ENCODE measurements at regions of chr9 and their contacts with region 1.

Region 1: GRCh38 chr9:136790927-136791641 is at the start of gene TMEM141:
- DNase-seq: peak; percentile 99 to 100 (median 99)
- ATAC-seq: peak; percentile 92
- H3K4me3 ChIP-seq: peak within 1 kb of the TSS; percentile 94
- H3K4me3 Mint-ChIP-seq: peak within 1 kb of the TSS; percentile 76 to 90 (median 86)
- H3K27ac ChIP-seq: peak within 1 kb of the TSS; percentile 91
- H3K27ac Mint-ChIP-seq: peak within 1 kb of the TSS; percentile 57 to 98 (median 92)
- H3K4me1 ChIP-seq: peaks cover 18 to 22% of the 10 kb centered on the region in 2 donors
- H3K4me1 Mint-ChIP-seq: peaks cover 10 to 40% (median 31%) of the 10 kb centered on the region in 7 donors
- H3K27me3 ChIP-seq: no peaks in the 10 kb centered on the region
- H3K27me3 Mint-ChIP-seq: peaks cover 0 to 16% (median 0%) of the 10 kb centered on the region in 5 donors
- total RNA-seq, gene TMEM141: 27.2 to 54.9 (median 36.2) TPM

Region 2: GRCh38 chr9:136728080-136728547 is 63.0 kb before region 1 on chr9:
- CTCF ChIA-PET with region 1: interaction called, 6 read pairs
- POLR2A ChIA-PET with region 1: interaction called, 3 read pairs
- intact Hi-C with region 1: loop called in 1 of 2 experiments (anchors 5 kb)
- DNase-seq: peak; percentile 87 to 97 (median 92)
- ATAC-seq: peak; percentile 96
- H3K4me3 ChIP-seq: peak overlapping the region; percentile 87
- H3K4me3 Mint-ChIP-seq: peak overlapping the region in 9 of 10 donors; percentile 47 to 99 (median 95)
- H3K27ac ChIP-seq: peak overlapping the region; percentile 83
- H3K27ac Mint-ChIP-seq: peak overlapping the region in 7 of 9 donors; percentile 47 to 93 (median 92)
- H3K4me1 ChIP-seq: peaks cover 16 to 17% of the 10 kb centered on the region in 2 donors
- H3K4me1 Mint-ChIP-seq: peaks cover 12 to 37% (median 28%) of the 10 kb centered on the region in 7 donors
- H3K27me3 ChIP-seq: no peaks in the 10 kb centered on the region
- H3K27me3 Mint-ChIP-seq: peaks cover 0 to 5% (median 0%) of the 10 kb centered on the region in 5 donors

Region 3: DNA sequence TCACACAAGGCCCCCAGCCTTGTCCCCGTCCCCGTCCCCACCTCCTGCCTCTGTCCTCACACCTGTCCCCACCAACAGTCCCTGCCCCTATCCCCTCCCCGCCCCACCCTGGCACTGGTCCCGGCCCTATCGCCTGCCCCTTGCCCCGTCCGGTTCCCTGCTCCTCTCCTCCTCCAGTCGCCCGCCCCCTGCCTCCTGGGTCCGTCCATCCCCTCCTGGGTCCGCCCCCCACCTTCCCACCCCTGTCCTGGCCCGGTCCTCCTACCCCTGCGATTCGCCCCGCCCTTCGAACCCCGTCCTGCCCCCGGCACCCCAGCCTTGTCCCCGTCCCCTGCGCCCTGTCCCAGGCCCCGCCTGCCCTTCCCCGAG is 74.6 kb after region 1 on chr9:
- CTCF ChIA-PET with region 1: no interaction called
- POLR2A ChIA-PET with region 1: no interaction called
- intact Hi-C with region 1: loop called in 1 of 2 experiments (anchors 1 kb)
- DNase-seq: no peak
- ATAC-seq: no peak
- H3K4me3 ChIP-seq: peak overlapping the region; percentile 68
- H3K4me3 Mint-ChIP-seq: peak overlapping the region; percentile 55 to 94 (median 87)
- H3K27ac ChIP-seq: peak overlapping the region; percentile 99
- H3K27ac Mint-ChIP-seq: peak overlapping the region; percentile 36 to 94 (median 87)
- H3K4me1 ChIP-seq: peaks cover 7 to 8% of the 10 kb centered on the region in 2 donors
- H3K4me1 Mint-ChIP-seq: peaks cover 4 to 24% (median 19%) of the 10 kb centered on the region in 7 donors
- H3K27me3 ChIP-seq: no peaks in the 10 kb centered on the region
- H3K27me3 Mint-ChIP-seq: no peaks in the 10 kb centered on the region

Region 4: DNA sequence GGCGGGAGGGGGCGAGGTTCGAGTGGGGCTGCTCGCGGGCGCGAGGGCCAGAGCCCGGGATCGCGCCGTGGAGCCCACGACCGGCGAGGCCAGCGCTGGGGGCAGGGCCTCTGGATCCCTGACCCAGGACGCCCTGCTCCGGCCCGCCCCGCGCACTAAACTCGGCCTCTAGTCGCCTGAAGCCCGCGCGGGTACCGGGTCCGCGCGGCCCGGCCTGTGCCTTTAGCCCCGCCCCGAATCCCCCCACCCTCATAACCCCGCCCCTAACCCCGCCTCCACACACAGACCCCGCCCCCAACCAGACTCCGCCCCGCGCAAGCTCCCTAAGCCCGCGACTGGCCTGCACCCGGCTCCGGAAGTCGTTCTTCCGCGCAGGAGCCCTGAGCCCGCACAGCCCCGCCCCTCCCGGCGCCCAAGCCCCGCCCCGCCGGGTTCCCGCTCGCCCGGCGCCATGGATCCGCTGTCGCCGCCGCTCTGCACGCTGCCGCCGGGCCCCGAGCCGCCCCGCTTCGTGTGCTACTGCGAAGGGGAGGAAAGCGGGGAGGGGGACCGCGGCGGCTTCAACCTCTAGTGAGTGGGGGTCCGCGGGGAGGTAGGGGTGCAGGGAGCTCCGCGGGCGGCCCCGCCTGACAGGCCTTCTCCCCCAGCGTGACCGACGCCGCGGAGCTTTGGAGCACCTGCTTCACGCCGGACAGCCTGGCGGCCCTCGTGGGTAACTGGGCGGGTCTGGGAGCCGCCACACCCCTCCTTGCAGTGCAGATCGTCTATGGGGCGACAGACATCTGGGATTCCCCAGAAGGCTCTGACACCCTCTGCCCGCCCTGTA is 201.1 kb after region 1 on chr9 and contains the start of gene PAXX:
- CTCF ChIA-PET with region 1: interaction called, 3 read pairs
- POLR2A ChIA-PET with region 1: interaction called, 3 read pairs
- intact Hi-C with region 1: loop called (anchors 1 kb)
- DNase-seq: peak; percentile 90 to 99 (median 93)
- ATAC-seq: peak; percentile 96
- H3K4me3 ChIP-seq: peak within 1 kb of the TSS; percentile 74
- H3K4me3 Mint-ChIP-seq: peak within 1 kb of the TSS; percentile 76 to 90 (median 86)
- H3K27ac ChIP-seq: peak within 1 kb of the TSS; percentile 81
- H3K27ac Mint-ChIP-seq: peak within 1 kb of the TSS; percentile 48 to 89 (median 88)
- H3K4me1 ChIP-seq: peaks cover 17 to 23% of the 10 kb centered on the region in 2 donors
- H3K4me1 Mint-ChIP-seq: peaks cover 0 to 25% (median 15%) of the 10 kb centered on the region in 7 donors
- H3K27me3 ChIP-seq: no peaks in the 10 kb centered on the region
- H3K27me3 Mint-ChIP-seq: peaks cover 5 to 22% (median 5%) of the 10 kb centered on the region in 5 donors
- total RNA-seq, gene PAXX: 54.8 to 78.2 (median 68.0) TPM

Region 5: DNA sequence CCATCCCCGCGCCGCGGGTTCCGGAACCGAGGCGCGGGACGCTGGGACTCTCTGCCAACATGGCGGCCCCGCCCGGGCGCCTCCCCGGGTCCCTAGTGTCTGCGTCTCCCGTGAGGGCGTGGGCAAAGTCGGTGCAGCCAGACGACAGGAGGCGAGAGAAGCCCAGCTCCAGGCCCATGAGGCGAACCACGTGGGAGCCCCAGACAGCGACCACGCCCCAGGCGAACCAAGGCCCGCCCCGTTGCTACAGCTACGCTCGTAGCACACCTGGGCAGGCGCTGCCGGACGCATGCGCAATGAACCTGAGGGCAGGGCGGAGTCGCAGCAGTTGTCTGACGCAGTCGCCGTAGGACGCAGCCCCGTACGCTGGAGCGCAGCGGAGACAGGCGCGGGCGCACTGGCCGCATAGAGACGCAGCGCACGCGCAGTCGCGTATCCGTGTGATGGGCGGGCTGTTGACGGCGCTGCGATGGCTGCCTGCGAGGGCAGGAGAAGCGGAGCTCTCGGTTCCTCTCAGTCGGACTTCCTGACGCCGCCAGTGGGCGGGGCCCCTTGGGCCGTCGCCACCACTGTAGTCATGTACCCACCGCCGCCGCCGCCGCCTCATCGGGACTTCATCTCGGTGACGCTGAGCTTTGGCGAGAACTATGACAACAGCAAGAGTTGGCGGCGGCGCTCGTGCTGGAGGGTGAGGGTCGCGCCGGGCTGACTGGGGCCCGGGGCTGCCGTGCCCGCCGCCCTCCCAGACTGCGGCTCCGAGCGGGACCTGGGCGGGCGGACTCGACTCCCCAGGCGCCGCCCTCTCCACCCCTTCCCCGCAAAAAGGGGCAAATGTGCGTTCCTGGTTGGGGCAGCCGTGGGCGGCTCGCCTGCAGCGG is 295.7 kb after region 1 on chr9 and contains the start of gene MAN1B1:
- CTCF ChIA-PET with region 1: no interaction called
- POLR2A ChIA-PET with region 1: interaction called, 4 read pairs
- intact Hi-C with region 1: loop called (anchors 1 kb)
- DNase-seq: peak; percentile 96 to 100 (median 99)
- ATAC-seq: peak; percentile 92
- H3K4me3 ChIP-seq: peak within 1 kb of the TSS; percentile 73
- H3K4me3 Mint-ChIP-seq: peak within 1 kb of the TSS; percentile 88 to 96 (median 92)
- H3K27ac ChIP-seq: peak within 1 kb of the TSS; percentile 92
- H3K27ac Mint-ChIP-seq: peak within 1 kb of the TSS; percentile 92 to 98 (median 95)
- H3K4me1 ChIP-seq: peaks cover 18% of the 10 kb centered on the region in 2 donors
- H3K4me1 Mint-ChIP-seq: peaks cover 25 to 34% (median 30%) of the 10 kb centered on the region in 7 donors
- H3K27me3 ChIP-seq: no peaks in the 10 kb centered on the region
- H3K27me3 Mint-ChIP-seq: no peaks in the 10 kb centered on the region
- total RNA-seq, gene MAN1B1: 57.3 to 74.2 (median 70.2) TPM

Region 6: DNA sequence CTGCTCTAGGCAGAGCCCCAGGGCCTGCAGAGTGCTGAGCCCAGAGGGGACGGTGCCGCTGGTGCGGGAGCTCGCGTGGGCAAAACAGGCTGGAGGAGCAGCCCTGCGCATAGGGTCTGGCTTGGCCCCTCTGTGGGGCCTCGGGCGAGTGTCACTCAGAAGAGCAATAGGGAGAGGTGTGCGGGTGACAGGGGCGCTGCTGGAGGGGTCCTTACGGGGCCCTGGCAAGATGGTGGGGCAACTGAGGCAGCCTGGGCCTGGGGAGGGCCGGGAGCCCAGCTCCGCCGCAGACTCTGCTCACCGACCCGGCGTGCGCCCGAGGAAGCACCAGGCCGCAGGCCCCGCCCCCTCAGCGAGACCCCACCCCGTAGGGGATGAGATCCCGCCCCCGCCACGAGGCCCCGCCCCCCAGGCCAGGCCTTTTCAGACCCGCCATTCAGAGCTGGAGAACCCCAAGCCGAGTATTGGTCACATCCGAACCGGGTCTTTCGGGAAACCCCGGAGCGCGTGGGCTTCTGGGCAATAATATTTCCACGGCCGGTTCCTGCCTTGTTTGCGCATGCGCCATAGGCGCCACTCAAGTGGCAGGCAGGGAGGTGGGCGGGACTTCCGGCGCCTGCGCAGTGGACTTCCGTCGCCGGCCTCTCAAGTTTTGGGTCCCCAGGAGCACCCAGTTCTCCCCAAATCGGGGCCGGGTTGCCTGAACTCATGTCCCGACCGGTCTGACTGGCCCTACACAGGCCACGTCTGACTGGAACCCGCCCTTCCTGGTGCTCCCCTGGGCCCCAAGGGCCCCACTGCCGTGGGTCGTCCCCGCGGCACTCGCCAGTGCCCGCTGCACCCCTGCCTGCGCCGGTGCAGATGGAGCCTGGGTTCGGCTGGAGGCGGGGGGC is 432.2 kb after region 1 on chr9:
- CTCF ChIA-PET with region 1: no interaction called
- POLR2A ChIA-PET with region 1: no interaction called
- intact Hi-C with region 1: loop called in 1 of 2 experiments (anchors 1 kb)
- DNase-seq: peak; percentile 93 to 99 (median 99)
- ATAC-seq: peak; percentile 97
- H3K4me3 ChIP-seq: peak overlapping the region; percentile 86
- H3K4me3 Mint-ChIP-seq: peak overlapping the region; percentile 78 to 88 (median 82)
- H3K27ac ChIP-seq: peak overlapping the region; percentile 91
- H3K27ac Mint-ChIP-seq: peak overlapping the region in 7 of 9 donors; percentile 21 to 92 (median 75)
- H3K4me1 ChIP-seq: peaks cover 9 to 11% of the 10 kb centered on the region in 2 donors
- H3K4me1 Mint-ChIP-seq: peaks cover 5 to 15% (median 6%) of the 10 kb centered on the region in 7 donors
- H3K27me3 ChIP-seq: no peaks in the 10 kb centered on the region
- H3K27me3 Mint-ChIP-seq: peaks cover 0 to 6% (median 4%) of the 10 kb centered on the region in 5 donors

Region 7: DNA sequence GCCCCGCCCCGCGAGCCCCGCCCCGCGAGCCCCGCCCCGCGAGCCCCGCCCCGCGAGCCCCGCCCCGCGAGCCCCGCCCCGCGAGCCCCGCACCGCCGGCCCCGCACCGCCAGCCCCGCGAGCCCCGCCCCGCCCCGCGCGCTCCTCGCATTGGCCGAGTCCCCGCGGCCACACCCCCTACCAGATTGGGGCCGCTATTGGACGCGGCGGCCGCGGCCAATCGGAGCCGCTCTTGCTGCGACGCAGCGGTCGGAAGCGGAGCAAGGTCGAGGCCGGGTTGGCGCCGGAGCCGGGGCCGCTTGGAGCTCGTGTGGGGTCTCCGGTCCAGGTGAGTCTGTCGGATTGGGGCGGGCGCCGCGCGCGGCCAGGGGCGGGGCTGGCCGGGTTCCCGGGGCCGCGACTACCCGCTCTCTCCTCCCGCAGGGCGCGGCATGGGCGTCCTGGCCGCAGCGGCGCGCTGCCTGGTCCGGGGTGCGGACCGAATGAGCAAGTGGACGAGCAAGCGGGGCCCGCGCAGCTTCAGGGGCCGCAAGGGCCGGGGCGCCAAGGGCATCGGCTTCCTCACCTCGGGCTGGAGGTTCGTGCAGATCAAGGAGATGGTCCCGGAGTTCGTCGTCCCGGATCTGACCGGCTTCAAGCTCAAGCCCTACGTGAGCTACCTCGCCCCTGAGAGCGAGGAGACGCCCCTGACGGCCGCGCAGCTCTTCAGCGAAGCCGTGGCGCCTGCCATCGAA is 760.7 kb after region 1 on chr9 and contains the start of gene MRPL41:
- CTCF ChIA-PET with region 1: no interaction called
- POLR2A ChIA-PET with region 1: no interaction called
- intact Hi-C with region 1: no loop called
- DNase-seq: peak; percentile 77 to 96 (median 85)
- ATAC-seq: peak; percentile 94
- H3K4me3 ChIP-seq: peak within 1 kb of the TSS; percentile 77
- H3K4me3 Mint-ChIP-seq: peak within 1 kb of the TSS; percentile 82 to 96 (median 90)
- H3K27ac ChIP-seq: peak within 1 kb of the TSS; percentile 85
- H3K27ac Mint-ChIP-seq: peak within 1 kb of the TSS; percentile 77 to 91 (median 83)
- H3K4me1 ChIP-seq: peaks cover 0 to 6% of the 10 kb centered on the region in 2 donors
- H3K4me1 Mint-ChIP-seq: peaks cover 11 to 24% (median 17%) of the 10 kb centered on the region in 7 donors
- H3K27me3 ChIP-seq: no peaks in the 10 kb centered on the region
- H3K27me3 Mint-ChIP-seq: no peaks in the 10 kb centered on the region
- total RNA-seq, gene MRPL41: 41.1 to 102 (median 53.9) TPM